ENCODE measurements at regions of chr11 and their contacts with region 1.

Region 1: GRCh38 chr11:130553306-130553705 is 104.9 kb downstream of the ADAMTS15 start:
- DNase-seq: no peak
- H3K4me3 ChIP-seq: no peak overlapping the region
- H3K27ac ChIP-seq: no peak overlapping the region
- H3K4me1 ChIP-seq: peaks cover 18% of the 10 kb centered on the region
- H3K27me3 ChIP-seq: no peaks in the 10 kb centered on the region
- CTCF ChIP-seq: no peak

Region 2: DNA sequence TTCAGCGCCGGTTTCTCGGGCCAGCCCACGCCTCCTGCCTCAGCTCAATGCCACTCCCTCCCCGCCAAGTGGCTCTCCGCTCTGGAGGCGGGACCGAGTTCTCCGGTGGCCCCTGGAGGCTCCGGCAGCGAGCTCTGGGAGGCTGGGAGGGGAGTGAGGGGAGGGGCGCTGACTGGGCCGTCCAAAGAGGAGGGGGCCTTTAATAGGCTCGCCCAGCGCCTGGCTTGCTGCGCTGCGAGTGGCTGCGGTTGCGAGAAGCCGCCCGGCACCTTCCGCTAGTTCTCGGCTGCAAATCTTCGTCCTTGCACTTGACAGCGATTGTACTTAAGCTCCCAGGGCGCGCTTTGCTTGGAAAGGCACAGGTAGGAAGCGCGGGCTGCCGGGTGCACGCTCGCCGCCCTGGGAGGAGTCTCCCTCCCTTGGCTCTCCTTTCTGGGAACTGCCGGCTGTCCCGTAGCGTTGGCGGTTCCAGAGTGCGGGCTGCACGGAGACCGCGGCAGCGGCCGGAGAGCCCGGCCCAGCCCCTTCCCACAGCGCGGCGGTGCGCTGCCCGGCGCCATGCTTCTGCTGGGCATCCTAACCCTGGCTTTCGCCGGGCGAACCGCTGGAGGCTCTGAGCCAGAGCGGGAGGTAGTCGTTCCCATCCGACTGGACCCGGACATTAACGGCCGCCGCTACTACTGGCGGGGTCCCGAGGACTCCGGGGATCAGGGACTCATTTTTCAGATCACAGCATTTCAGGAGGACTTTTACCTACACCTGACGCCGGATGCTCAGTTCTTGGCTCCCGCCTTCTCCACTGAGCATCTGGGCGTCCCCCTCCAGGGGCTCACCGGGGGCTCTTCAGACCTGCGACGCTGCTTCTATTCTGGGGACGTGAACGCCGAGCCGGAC is 104.6 kb before region 1 on chr11 and contains the start of gene ADAMTS15:
- CTCF ChIA-PET with region 1: no interaction called
- dilution Hi-C with region 1: no loop called
- in situ Hi-C with region 1: no loop called
- intact Hi-C with region 1: loop called (anchors 5 kb)
- DNase-seq: peak; percentile 85
- H3K4me3 ChIP-seq: peak within 1 kb of the TSS; percentile 40 to 62 (median 53)
- H3K27ac ChIP-seq: no peak within 1 kb of the TSS
- H3K4me1 ChIP-seq: peaks cover 17% of the 10 kb centered on the region
- H3K27me3 ChIP-seq: no peaks in the 10 kb centered on the region
- CTCF ChIP-seq: no peak
- total RNA-seq, gene ADAMTS15: 2.4 to 16.5 TPM

Region 3: GRCh38 chr11:130531061-130531460 is 22.2 kb before region 1 on chr11:
- CTCF ChIA-PET with region 1: no interaction called
- dilution Hi-C with region 1: no loop called
- in situ Hi-C with region 1: no loop called
- intact Hi-C with region 1: no loop called
- DNase-seq: no peak
- H3K4me3 ChIP-seq: no peak overlapping the region
- H3K27ac ChIP-seq: no peak overlapping the region
- H3K4me1 ChIP-seq: peaks cover 11% of the 10 kb centered on the region
- H3K27me3 ChIP-seq: no peaks in the 10 kb centered on the region
- CTCF ChIP-seq: no peak

Region 4: DNA sequence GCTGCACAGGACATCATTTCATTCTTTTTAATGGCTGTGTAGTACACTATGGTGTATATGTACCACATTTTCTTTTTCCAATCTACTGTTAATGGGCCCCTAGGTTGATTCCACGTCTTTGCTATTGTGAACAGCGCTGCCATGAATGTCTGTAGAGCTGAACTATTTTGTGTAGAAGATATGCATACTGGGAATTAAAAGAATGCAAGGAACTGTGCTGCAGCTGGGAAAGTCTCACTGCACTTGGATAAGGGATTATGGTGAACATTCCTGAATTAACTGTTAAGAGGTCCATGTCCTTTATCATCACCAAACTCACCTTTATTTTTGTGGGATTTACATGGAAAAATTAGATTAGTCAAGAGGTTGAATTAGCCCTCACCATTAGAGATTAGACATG is 138.3 kb after region 1 on chr11:
- CTCF ChIA-PET with region 1: no interaction called
- dilution Hi-C with region 1: no loop called
- in situ Hi-C with region 1: no loop called
- intact Hi-C with region 1: no loop called
- DNase-seq: no peak
- H3K4me3 ChIP-seq: no peak overlapping the region
- H3K27ac ChIP-seq: no peak overlapping the region
- H3K4me1 ChIP-seq: no peaks in the 10 kb centered on the region
- H3K27me3 ChIP-seq: no peaks in the 10 kb centered on the region
- CTCF ChIP-seq: no peak

Measured in mammary epithelial cell (primary cell).